Head of caudate nucleus (tissue), 42 donors: ENCODE measurements at regions of chr12 and their contacts with region 1.

Region 1: GRCh38 chr12:46153268-46153872 is 115.5 kb downstream of the SLC38A1 start:
- DNase-seq: no peak

Region 2: GRCh38 chr12:45509187-45509586 is 644.2 kb before region 1 on chr12:
- intact Hi-C with region 1: no loop called
- DNase-seq: no peak

Region 3: GRCh38 chr12:45990468-45991283 is 162.7 kb before region 1 on chr12 and contains the start of gene SCAF11:
- intact Hi-C with region 1: loop called (anchors 10 kb)
- DNase-seq: peak; percentile 98 to 100 (median 100)

Region 4: DNA sequence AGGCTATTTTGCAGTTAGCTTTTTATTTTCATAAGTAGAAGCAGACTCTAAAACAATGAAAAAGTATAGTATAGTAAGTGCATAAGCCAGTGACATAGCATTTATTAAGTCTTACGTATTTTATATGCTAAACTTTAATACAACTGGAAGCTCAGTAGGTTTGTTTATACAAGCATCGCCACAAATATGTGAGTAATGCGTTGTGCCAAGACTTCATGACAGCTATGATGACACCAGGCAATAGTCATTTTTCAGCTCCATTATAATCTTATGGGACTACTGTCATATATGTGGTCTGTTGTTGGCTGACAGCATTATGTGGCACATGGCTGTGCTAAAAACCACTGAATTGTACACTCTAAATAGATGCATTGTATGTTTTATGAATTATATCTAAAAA is 178.9 kb after region 1 on chr12:
- intact Hi-C with region 1: no loop called
- DNase-seq: no peak

Region 5: GRCh38 chr12:46382964-46383653 is 229.7 kb after region 1 on chr12:
- intact Hi-C with region 1: loop called (anchors 5 kb)
- DNase-seq: peak; percentile 92 to 99 (median 98)